A673 (cell line): ENCODE measurements at regions of chr10 and their contacts with region 1.

Region 1: DNA sequence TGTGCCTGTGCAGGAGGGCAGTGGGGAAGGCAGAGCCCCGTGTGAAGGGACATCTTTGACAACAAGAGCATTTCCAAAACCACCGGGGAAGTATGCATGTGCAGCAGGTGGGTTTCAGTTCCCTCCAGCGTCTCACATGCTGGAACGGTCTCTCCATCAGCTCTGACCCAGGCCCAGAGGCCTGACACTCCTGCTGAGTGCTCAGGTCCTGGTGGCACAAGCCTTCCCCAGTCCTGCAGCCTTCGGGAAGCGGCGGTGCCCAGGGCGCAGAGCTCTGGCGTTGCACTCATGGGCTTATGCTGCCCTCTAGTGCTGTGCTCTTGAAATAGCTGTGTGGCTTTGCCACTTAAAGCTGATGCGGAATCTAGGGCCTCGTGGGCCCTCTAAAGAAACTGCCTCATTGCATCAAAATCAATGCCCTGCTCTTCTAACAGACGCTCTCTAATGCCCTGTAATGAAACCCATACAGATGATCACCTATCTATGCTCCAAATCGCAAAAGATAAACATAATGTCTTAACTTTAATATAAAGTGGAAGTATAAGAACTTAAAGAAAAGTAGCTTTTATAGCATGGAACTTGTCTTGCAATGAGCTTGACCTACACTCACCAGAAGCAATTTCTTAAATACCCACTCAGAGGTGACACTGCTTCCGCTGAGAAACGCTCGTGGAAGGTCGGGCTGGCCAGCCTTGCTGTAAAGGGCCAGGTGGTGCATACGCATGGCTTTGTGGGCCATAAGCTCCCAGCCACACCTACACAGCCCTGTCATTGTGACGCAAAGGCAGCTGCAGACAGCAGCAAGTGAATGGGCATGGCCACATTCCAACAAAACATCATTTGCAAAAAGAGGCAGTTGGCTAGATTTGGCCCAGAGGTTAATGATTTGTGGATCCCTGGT is 38.6 kb downstream of the CLRN3 start:
- DNase-seq: peak; percentile 77
- H3K4me3 ChIP-seq: no peak overlapping the region
- H3K27ac ChIP-seq: no peak overlapping the region
- H3K4me1 ChIP-seq: no peaks in the 10 kb centered on the region
- H3K27me3 ChIP-seq: no peaks in the 10 kb centered on the region
- CTCF ChIP-seq: peak; percentile 85

Region 2: DNA sequence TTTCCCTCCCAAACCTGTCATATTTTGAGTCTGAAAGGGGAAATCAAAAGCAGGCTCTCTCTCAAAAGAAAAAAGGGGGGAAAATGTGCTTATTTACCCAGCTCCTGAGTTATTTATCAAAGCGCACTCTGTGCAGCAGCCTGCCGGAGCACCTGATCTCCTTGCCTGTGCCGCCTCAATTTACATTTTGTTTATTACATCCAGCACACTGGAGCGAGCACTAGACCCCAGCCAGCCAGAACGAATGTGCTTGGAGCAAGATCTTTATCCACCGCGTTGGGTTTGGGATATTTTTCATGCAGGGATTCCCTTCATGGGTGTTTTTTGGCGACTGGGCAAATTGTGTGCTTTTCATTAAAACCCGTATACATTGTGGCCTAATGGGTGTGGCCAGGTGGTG is 495.8 kb before region 1 on chr10:
- CTCF ChIA-PET with region 1: no interaction called
- POLR2A ChIA-PET with region 1: no interaction called
- intact Hi-C with region 1: no loop called
- DNase-seq: no peak
- H3K4me3 ChIP-seq: no peak overlapping the region
- H3K27ac ChIP-seq: no peak overlapping the region
- H3K4me1 ChIP-seq: no peaks in the 10 kb centered on the region
- H3K27me3 ChIP-seq: no peaks in the 10 kb centered on the region
- CTCF ChIP-seq: no peak

Region 3: DNA sequence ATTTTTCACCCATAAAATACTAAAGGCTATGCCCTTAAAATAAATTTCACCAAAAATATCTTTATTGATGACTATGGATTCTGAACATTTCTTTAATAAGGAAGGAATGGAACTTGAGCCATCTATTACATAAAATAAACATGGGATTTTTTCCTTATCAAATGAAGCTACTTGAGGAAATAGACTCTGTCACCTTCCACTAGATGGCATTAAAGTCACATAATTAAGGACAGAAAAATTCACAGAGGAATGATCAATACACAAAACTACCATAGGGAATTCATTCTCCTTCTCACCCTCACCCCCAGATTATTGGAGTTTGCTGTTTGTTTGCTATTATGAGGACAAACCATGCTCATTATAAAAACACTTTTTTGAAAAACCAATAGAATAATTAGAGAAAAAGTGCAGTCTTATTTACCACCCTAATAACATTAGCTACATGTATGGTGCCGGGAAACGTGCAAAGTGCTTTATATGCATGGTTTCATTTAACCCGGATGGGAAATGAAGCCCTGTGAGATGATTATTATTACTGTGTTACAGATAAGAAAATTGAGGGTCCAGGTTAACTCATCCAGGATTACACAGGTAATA is 138.2 kb before region 1 on chr10:
- CTCF ChIA-PET with region 1: interaction called, 30 read pairs
- POLR2A ChIA-PET with region 1: no interaction called
- intact Hi-C with region 1: loop called (anchors 1 kb)
- DNase-seq: peak; percentile 54
- H3K4me3 ChIP-seq: no peak overlapping the region
- H3K27ac ChIP-seq: no peak overlapping the region
- H3K4me1 ChIP-seq: no peaks in the 10 kb centered on the region
- H3K27me3 ChIP-seq: peaks cover 12% of the 10 kb centered on the region
- CTCF ChIP-seq: peak; percentile 61